ENCODE measurements at regions of chr22 and their contacts with region 1.

Region 1: GRCh38 chr22:31891366-31892079 is 52.8 kb upstream of the YWHAH start:
- DNase-seq: peak; percentile 79
- H3K4me3 ChIP-seq: no peak overlapping the region
- H3K27ac ChIP-seq: peak overlapping the region; percentile 80
- H3K4me1 ChIP-seq: peaks cover 18% of the 10 kb centered on the region
- H3K27me3 ChIP-seq: no peaks in the 10 kb centered on the region
- CTCF ChIP-seq: no peak

Region 2: GRCh38 chr22:31715147-31715778 is 176.3 kb before region 1 on chr22:
- CTCF ChIA-PET with region 1: no interaction called
- POLR2A ChIA-PET with region 1: no interaction called
- intact Hi-C with region 1: no loop called
- DNase-seq: no peak
- H3K4me3 ChIP-seq: no peak overlapping the region
- H3K27ac ChIP-seq: no peak overlapping the region
- H3K4me1 ChIP-seq: no peaks in the 10 kb centered on the region
- H3K27me3 ChIP-seq: no peaks in the 10 kb centered on the region
- CTCF ChIP-seq: no peak

Region 3: GRCh38 chr22:31814942-31815341 is 76.6 kb before region 1 on chr22:
- CTCF ChIA-PET with region 1: no interaction called
- POLR2A ChIA-PET with region 1: interaction called, 11 read pairs
- intact Hi-C with region 1: no loop called
- DNase-seq: no peak
- H3K4me3 ChIP-seq: no peak overlapping the region
- H3K27ac ChIP-seq: no peak overlapping the region
- H3K4me1 ChIP-seq: no peaks in the 10 kb centered on the region
- H3K27me3 ChIP-seq: no peaks in the 10 kb centered on the region
- CTCF ChIP-seq: no peak

Region 4: GRCh38 chr22:31861226-31861840 is 30.2 kb before region 1 on chr22:
- CTCF ChIA-PET with region 1: no interaction called
- POLR2A ChIA-PET with region 1: no interaction called
- intact Hi-C with region 1: no loop called
- DNase-seq: no peak
- H3K4me3 ChIP-seq: no peak overlapping the region
- H3K27ac ChIP-seq: no peak overlapping the region
- H3K4me1 ChIP-seq: no peaks in the 10 kb centered on the region
- H3K27me3 ChIP-seq: no peaks in the 10 kb centered on the region
- CTCF ChIP-seq: no peak